ENCODE measurements at regions of chr15 and their contacts with region 1.

Region 1: DNA sequence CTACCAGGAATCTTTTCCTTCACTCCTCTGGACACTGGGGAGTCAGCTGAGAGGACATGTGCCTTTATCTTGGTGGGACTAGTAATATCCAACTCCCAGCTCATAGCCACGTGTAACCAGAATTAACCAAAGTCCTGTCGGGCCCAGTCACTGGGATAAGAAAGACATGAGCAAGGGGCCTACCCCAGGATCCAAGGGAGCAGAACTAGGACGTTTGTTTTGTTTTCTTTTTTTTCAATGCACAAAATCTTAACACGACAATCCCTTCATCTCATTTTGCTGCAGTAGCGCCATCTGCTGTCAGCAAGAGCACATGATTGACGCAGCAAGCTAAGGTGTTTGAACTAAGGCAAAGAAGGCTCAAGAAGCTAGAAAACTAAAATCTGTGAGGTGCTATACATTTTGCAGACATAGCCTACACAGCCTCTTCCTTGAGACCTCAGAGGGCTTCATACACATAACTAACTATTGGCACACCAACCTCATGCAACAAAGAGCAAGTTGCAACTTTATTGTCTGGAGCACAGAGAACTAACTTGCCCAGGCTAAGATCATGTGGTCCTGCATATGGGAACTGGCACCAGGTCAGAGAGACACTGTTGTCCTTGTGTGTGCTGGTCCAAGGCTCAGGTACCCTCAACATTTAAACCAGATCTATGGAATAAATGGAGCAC is 43.6 kb downstream of the RLBP1 start:
- DNase-seq: peak; percentile 84
- ATAC-seq: peak; percentile 31
- H3K4me3 Mint-ChIP-seq: no peak overlapping the region
- H3K27ac Mint-ChIP-seq: peak overlapping the region; percentile 91
- H3K4me1 Mint-ChIP-seq: peaks cover 40% of the 10 kb centered on the region
- H3K27me3 Mint-ChIP-seq: no peaks in the 10 kb centered on the region

Region 2: GRCh38 chr15:88649286-88649733 is 528.5 kb before region 1 on chr15:
- CTCF ChIA-PET with region 1: no interaction called
- POLR2A ChIA-PET with region 1: no interaction called
- intact Hi-C with region 1: no loop called
- DNase-seq: peak; percentile 92
- ATAC-seq: peak; percentile 87
- H3K4me3 Mint-ChIP-seq: peak overlapping the region; percentile 58
- H3K27ac Mint-ChIP-seq: peak overlapping the region; percentile 98
- H3K4me1 Mint-ChIP-seq: peaks cover 74% of the 10 kb centered on the region
- H3K27me3 Mint-ChIP-seq: no peaks in the 10 kb centered on the region

Region 3: GRCh38 chr15:88897456-88898194 is 280.1 kb before region 1 on chr15:
- CTCF ChIA-PET with region 1: interaction called, 10 read pairs
- POLR2A ChIA-PET with region 1: no interaction called
- intact Hi-C with region 1: loop called (anchors 1 to 5 kb)
- DNase-seq: peak; percentile 86
- ATAC-seq: peak; percentile 80
- H3K4me3 Mint-ChIP-seq: no peak overlapping the region
- H3K27ac Mint-ChIP-seq: no peak overlapping the region
- H3K4me1 Mint-ChIP-seq: peaks cover 35% of the 10 kb centered on the region
- H3K27me3 Mint-ChIP-seq: no peaks in the 10 kb centered on the region

Region 4: DNA sequence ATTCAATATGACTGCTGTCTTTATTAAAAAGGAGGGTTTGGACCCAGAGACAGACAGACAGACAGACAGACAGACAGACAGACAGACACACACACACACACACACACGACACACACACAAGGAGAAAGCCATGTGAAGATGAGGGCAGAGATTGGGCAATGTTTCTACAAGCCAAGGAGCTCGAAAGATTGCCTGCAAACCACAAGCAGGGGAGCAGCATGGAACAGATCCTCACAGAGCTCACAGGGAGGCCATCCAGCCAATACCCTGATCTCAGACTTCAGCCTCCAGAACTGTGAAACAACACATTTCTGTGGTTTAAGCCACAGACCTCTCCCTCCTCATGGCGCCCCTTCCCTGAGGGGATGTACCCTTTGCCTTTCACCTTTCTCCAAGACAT is 125.3 kb before region 1 on chr15:
- CTCF ChIA-PET with region 1: interaction called, 90 read pairs
- POLR2A ChIA-PET with region 1: no interaction called
- intact Hi-C with region 1: loop called (anchors 1 kb)
- DNase-seq: no peak
- ATAC-seq: no peak
- H3K4me3 Mint-ChIP-seq: no peak overlapping the region
- H3K27ac Mint-ChIP-seq: no peak overlapping the region
- H3K4me1 Mint-ChIP-seq: peaks cover 23% of the 10 kb centered on the region
- H3K27me3 Mint-ChIP-seq: no peaks in the 10 kb centered on the region

Region 5: DNA sequence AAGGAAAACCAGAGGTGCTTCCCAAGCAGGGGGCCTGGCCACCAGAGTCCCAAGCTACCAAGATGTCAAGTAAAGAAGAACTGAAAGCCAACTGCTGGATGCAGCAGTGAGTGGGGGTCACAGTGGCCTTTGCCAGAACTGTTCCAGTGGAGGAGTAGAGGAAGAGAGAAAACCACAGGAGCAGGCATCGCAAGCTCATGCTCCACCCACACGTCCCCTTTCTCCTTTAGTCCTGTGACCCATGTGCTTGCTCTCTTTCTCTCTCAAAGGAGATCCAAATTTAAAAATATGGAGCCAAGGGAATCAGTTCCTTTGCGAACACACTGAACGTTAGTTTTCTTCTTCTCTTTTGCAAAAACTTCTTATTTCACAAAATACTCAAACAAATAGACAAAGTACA is 101.9 kb before region 1 on chr15:
- CTCF ChIA-PET with region 1: interaction called, 12 read pairs
- POLR2A ChIA-PET with region 1: no interaction called
- intact Hi-C with region 1: no loop called
- DNase-seq: no peak
- ATAC-seq: no peak
- H3K4me3 Mint-ChIP-seq: no peak overlapping the region
- H3K27ac Mint-ChIP-seq: no peak overlapping the region
- H3K4me1 Mint-ChIP-seq: peaks cover 22% of the 10 kb centered on the region
- H3K27me3 Mint-ChIP-seq: peaks cover 2% of the 10 kb centered on the region

Region 6: DNA sequence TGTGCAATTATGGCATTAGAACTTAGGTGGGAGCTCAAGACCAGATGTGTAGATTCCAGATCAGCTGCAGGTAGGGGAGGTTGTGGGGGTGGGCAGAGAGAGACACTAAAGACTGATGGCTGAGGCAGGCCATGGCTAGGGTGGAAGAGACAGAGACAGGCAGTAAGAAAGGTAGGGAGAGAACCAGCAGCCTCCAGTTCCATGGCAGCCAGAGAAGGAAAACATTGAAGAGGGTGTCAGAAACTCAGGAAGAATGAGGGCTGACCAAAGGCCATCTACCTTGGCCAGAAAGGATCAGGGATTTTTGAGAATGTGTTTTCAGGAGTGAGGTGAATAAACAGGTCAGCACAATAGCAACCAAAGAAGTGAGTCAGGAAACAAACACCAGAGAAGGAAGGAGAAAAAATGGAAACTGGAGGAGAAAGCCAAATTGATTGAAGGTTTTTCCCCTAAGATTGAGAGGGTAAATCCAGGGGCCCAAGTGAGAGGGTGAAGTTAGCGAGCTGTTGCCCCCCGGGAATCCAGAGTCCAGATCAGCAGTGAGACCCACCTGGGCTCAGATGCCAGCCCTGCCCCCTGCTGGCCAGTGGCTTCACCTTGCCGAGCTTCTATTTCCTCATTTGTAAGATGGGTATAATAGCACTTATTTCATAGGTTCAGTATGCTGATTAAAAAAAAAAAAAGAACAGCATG is 48.5 kb before region 1 on chr15:
- CTCF ChIA-PET with region 1: interaction called, 19 read pairs
- POLR2A ChIA-PET with region 1: no interaction called
- intact Hi-C with region 1: loop called in 1 of 2 experiments (anchors 5 kb)
- DNase-seq: peak; percentile 75
- ATAC-seq: peak; percentile 25
- H3K4me3 Mint-ChIP-seq: no peak overlapping the region
- H3K27ac Mint-ChIP-seq: no peak overlapping the region
- H3K4me1 Mint-ChIP-seq: peaks cover 28% of the 10 kb centered on the region
- H3K27me3 Mint-ChIP-seq: no peaks in the 10 kb centered on the region

Region 7: DNA sequence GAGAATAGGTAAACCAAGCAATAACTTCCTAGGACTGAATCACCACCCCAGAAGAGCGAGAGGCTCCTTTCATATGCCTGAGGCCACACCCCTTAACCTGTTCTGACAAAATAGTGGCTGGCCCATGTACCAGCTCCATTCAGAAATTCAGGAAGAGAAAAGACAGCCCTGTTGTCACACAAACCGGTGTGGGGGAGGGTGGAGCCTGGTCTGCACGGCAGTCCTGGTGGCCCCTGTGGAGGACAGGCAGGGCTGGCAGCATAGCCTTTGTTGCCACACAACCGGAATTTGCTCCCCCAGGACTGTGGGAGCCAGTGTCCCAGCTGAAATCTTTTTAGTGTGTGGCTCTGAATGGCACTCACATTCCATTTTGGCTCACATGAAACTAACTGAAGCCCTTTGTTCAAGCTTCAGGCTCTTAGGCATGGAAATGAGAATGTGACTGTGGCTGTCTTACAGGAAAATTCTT is 19.8 kb after region 1 on chr15:
- CTCF ChIA-PET with region 1: interaction called, 19 read pairs
- POLR2A ChIA-PET with region 1: no interaction called
- intact Hi-C with region 1: loop called (anchors 1 kb)
- DNase-seq: peak; percentile 62
- ATAC-seq: peak; percentile 90
- H3K4me3 Mint-ChIP-seq: peak overlapping the region; percentile 4
- H3K27ac Mint-ChIP-seq: peak overlapping the region; percentile 75
- H3K4me1 Mint-ChIP-seq: peaks cover 33% of the 10 kb centered on the region
- H3K27me3 Mint-ChIP-seq: no peaks in the 10 kb centered on the region

Region 8: DNA sequence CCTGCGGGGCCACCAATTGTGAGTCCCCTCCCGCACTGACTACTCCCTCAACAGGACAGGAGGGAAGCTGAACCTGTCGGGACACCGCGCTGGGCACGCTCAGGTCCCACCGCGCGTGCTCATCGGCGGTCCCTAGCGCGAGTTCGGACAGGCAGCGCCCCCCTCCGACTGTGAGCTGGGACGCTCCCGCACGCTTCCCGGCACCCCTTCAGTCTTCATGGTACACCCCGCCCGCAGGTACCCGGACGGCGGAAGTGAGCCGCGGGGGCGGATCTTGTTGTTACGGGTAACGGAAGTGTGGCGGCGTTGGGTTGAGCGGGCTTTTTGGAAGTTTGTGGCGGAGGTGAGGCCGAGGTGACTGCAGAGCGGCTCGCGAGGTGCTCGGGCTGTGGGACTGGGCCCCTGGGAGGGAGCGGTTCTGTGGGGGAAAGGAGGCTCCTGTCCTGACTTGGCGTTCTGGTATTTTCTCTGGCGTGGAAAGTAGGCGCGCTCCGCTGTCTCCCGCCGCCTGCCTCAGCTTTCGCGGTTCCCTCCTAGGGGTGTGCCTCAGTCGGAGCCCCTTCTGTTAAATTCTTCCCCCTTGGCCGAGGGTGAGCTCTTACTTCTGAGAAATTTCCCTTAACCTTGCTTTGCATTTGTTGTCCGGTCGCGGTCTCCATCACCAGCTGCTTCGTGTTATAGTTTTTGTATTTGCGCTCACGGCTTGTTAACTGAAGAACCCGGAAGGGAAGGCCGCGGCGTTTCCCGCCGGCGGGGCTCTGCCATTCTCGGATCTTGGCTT is 66.1 kb after region 1 on chr15 and contains the start of gene FANCI:
- CTCF ChIA-PET with region 1: interaction called, 6 read pairs
- POLR2A ChIA-PET with region 1: no interaction called
- intact Hi-C with region 1: loop called in 1 of 2 experiments (anchors 2 kb)
- DNase-seq: peak; percentile 98
- ATAC-seq: peak; percentile 96
- H3K4me3 Mint-ChIP-seq: peak within 1 kb of the TSS; percentile 93
- H3K27ac Mint-ChIP-seq: peak within 1 kb of the TSS; percentile 93
- H3K4me1 Mint-ChIP-seq: peaks cover 29% of the 10 kb centered on the region
- H3K27me3 Mint-ChIP-seq: no peaks in the 10 kb centered on the region
- total RNA-seq, gene FANCI: 150 to 199 TPM

Region 9: DNA sequence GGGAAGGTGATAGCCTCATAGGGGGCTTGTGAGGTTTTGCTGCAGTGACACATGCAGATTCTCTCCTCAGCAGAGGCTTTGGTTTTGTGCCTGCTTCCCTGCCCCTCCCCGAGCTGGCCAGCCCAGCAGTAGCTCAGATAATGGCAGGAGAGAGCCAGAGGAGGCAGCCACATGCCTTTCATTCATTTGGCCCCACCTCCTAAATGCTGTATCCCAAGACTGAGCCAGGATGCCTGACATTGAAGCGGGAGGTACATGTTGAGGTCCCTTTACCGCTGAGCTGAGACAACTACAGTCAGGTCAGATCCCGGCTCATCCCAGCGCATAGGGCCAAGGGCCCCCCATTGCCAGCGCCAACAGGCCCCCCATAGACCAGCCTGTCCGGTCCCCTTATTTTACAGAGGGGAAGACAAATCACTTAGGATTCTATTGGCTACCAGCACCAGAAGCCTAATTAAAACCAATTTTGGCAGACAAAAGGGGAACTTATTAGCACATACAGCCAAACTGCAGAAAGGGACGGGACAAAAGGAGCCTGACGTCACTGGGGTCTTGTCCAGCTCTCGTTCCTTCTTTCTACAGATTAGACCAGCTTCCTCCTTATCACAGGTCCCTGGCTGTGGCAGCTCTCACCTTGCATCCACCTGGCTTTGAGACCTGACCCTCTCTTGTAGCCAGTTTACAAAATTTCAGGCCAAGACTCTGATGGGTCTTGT is 168.9 kb after region 1 on chr15:
- CTCF ChIA-PET with region 1: no interaction called
- POLR2A ChIA-PET with region 1: no interaction called
- intact Hi-C with region 1: no loop called
- DNase-seq: no peak
- ATAC-seq: no peak
- H3K4me3 Mint-ChIP-seq: no peak overlapping the region
- H3K27ac Mint-ChIP-seq: no peak overlapping the region
- H3K4me1 Mint-ChIP-seq: peaks cover 10% of the 10 kb centered on the region
- H3K27me3 Mint-ChIP-seq: peaks cover 2% of the 10 kb centered on the region

Region 10: GRCh38 chr15:89760303-89761008 is 582.7 kb after region 1 on chr15:
- CTCF ChIA-PET with region 1: no interaction called
- POLR2A ChIA-PET with region 1: no interaction called
- intact Hi-C with region 1: no loop called
- DNase-seq: peak; percentile 85
- ATAC-seq: peak; percentile 88
- H3K4me3 Mint-ChIP-seq: no peak overlapping the region
- H3K27ac Mint-ChIP-seq: no peak overlapping the region
- H3K4me1 Mint-ChIP-seq: no peaks in the 10 kb centered on the region
- H3K27me3 Mint-ChIP-seq: peaks cover 6% of the 10 kb centered on the region